MCF 10A (cell line): ENCODE measurements at regions of chr11 and their contacts with region 1.

Region 1: DNA sequence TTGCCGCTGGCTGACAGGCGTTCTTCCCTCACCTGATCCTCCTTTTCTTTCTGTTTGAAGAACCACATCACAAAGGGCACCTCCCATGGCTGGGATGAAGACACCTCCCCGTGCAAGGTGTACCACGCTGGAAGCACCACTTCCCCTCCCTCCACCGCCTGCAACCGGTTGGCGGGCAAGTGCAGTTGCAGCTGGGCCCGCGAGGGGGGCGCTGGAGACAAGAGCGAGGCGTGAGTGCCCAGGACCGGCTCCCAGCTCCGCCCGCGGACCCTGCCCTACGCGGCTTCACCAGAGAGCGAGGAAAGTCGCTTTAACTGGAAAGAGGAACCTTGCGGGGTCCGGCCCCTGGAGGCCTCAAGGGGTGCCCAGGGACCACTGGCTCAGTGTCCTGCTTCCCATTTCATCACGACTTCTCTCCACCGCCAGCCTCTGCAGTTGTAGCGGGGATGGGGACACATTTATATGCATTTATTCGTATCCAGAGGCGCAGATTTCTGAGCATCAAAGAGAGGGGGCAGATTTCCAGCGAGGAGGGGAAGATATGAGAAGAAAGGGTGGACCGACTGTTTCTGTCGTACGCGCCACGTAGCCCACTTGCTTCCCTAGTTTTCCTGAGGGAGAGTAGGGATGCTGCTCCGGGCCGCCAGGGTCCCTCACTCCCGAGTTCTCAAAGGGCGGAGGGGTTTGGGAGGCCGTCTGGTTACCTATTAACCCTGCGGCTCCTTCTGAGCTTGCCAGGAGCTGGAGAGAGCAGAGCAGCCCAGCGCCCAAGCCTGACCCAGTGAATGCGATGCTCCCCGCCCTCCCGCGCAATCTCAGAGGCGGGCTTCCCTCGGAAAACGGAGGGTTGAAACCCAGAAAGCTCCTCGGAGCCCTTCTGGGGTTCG is 3.5 kb downstream of the ESAM start:
- DNase-seq: peak; percentile 41
- H3K4me3 Mint-ChIP-seq: peak overlapping the region; percentile 33
- H3K27ac Mint-ChIP-seq: no peak overlapping the region
- H3K4me1 Mint-ChIP-seq: peaks cover 5% of the 10 kb centered on the region
- H3K27me3 Mint-ChIP-seq: no peaks in the 10 kb centered on the region
- CTCF ChIP-seq: peak; percentile 34

Region 2: DNA sequence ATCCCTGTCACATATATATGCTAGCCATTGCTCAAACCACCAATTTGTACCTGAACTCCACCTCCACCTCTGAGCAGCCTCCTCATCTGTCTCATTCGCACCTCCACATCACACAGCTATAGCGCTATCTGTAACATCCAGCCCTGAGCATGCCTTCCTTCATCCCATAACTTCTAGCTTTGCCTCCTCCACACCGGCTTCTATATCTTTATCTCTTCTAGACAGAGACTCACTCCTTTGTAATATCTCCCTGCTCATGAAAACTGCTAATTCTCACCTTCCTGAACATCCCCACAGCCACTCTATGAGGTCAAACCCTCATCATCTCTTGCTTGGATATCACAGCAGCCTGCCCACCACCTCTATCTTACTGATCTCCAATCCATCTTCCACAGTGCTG is 91.0 kb before region 1 on chr11:
- CTCF ChIA-PET with region 1: interaction called, 112 read pairs
- POLR2A ChIA-PET with region 1: interaction called, 3 read pairs
- intact Hi-C with region 1: loop called (anchors 1 kb)
- DNase-seq: no peak
- H3K4me3 Mint-ChIP-seq: no peak overlapping the region
- H3K27ac Mint-ChIP-seq: no peak overlapping the region
- H3K4me1 Mint-ChIP-seq: peaks cover 5% of the 10 kb centered on the region
- H3K27me3 Mint-ChIP-seq: no peaks in the 10 kb centered on the region
- CTCF ChIP-seq: no peak

Region 3: GRCh38 chr11:124778281-124778680 is 19.7 kb after region 1 on chr11:
- CTCF ChIA-PET with region 1: interaction called, 42 read pairs
- POLR2A ChIA-PET with region 1: no interaction called
- intact Hi-C with region 1: no loop called
- DNase-seq: no peak
- H3K4me3 Mint-ChIP-seq: no peak overlapping the region
- H3K27ac Mint-ChIP-seq: no peak overlapping the region
- H3K4me1 Mint-ChIP-seq: no peaks in the 10 kb centered on the region
- H3K27me3 Mint-ChIP-seq: no peaks in the 10 kb centered on the region
- CTCF ChIP-seq: no peak

Region 4: DNA sequence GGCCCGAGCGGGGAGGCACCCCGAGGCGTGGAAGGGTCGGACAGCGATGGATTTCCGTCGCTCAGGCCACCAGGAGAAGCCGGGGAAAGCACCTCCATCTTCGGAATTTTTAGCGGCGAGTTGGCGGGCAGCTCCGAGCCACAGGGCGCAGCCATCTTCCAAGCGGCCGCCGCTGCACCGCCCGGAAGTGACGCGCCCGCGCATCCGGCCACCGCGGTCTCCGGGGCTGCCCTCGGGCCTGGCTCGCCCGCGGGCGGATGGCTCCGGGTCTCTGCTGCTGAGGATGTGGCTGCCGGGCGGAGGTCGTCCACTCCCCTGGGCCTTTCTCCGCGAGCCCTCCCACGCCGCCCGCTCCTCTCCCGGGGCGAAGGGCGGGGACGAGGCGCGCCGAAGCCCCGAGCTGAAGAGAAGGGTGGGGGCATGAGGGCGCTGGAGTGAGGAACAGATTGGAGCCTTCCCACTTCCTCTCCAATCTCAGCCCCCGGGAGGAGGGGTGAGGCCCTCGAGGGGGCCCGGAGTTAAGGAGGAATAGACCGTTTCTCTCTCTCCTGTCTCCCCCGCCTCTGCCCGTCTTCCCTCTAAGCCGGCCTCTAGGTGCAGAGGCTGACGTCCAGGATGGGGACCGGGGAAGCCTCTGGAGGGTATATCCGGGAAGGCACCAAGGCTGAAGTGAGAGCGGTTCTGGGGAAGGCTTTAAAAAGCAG is 41.8 kb after region 1 on chr11 and contains the start of gene MSANTD2:
- CTCF ChIA-PET with region 1: interaction called, 50 read pairs
- POLR2A ChIA-PET with region 1: interaction called, 8 read pairs
- intact Hi-C with region 1: no loop called
- DNase-seq: peak; percentile 60
- H3K4me3 Mint-ChIP-seq: peak within 1 kb of the TSS; percentile 83
- H3K27ac Mint-ChIP-seq: peak within 1 kb of the TSS; percentile 84
- H3K4me1 Mint-ChIP-seq: peaks cover 11% of the 10 kb centered on the region
- H3K27me3 Mint-ChIP-seq: no peaks in the 10 kb centered on the region
- CTCF ChIP-seq: no peak
- total RNA-seq, gene MSANTD2: 14.2 and 15.3 TPM in 2 replicates